Natural killer cell (primary cell): ENCODE measurements at regions of chr10 and their contacts with region 1.

Region 1: GRCh38 chr10:1048732-1049424 is at the start of gene IDI1:
- DNase-seq: peak; percentile 98
- ATAC-seq: peak; percentile 77 to 93 (median 81)
- H3K4me3 ChIP-seq: peak within 1 kb of the TSS; percentile 93
- H3K4me3 Mint-ChIP-seq: peak within 1 kb of the TSS; percentile 95
- H3K27ac ChIP-seq: peak within 1 kb of the TSS; percentile 100
- H3K27ac Mint-ChIP-seq: peak within 1 kb of the TSS; percentile 98 to 99
- H3K4me1 ChIP-seq: peaks cover 37% of the 10 kb centered on the region
- H3K4me1 Mint-ChIP-seq: peaks cover 56 to 78% of the 10 kb centered on the region in 2 donors
- H3K27me3 ChIP-seq: no peaks in the 10 kb centered on the region
- H3K27me3 Mint-ChIP-seq: no peaks in the 10 kb centered on the region
- CTCF ChIP-seq: no peak
- total RNA-seq, gene IDI1: 156 to 229 (median 163) TPM

Region 2: GRCh38 chr10:909831-910230 is 139.0 kb before region 1 on chr10:
- intact Hi-C with region 1: no loop called
- DNase-seq: no peak
- ATAC-seq: no peak
- H3K4me3 ChIP-seq: no peak overlapping the region
- H3K4me3 Mint-ChIP-seq: no peak overlapping the region
- H3K27ac ChIP-seq: no peak overlapping the region
- H3K27ac Mint-ChIP-seq: peak overlapping the region; percentile 0 to 9
- H3K4me1 ChIP-seq: no peaks in the 10 kb centered on the region
- H3K4me1 Mint-ChIP-seq: peaks cover 27 to 31% of the 10 kb centered on the region in 2 donors
- H3K27me3 ChIP-seq: no peaks in the 10 kb centered on the region
- H3K27me3 Mint-ChIP-seq: no peaks in the 10 kb centered on the region
- CTCF ChIP-seq: no peak

Region 3: GRCh38 chr10:931416-932318 is 117.2 kb before region 1 on chr10 and contains the start of gene LARP4B:
- intact Hi-C with region 1: loop called (anchors 2 kb)
- DNase-seq: peak; percentile 98
- ATAC-seq: peak; percentile 95 to 100 (median 97)
- H3K4me3 ChIP-seq: peak within 1 kb of the TSS; percentile 63
- H3K4me3 Mint-ChIP-seq: peak within 1 kb of the TSS; percentile 95
- H3K27ac ChIP-seq: peak within 1 kb of the TSS; percentile 96
- H3K27ac Mint-ChIP-seq: peak within 1 kb of the TSS; percentile 91 to 97
- H3K4me1 ChIP-seq: peaks cover 17% of the 10 kb centered on the region
- H3K4me1 Mint-ChIP-seq: peaks cover 24 to 40% of the 10 kb centered on the region in 2 donors
- H3K27me3 ChIP-seq: no peaks in the 10 kb centered on the region
- H3K27me3 Mint-ChIP-seq: no peaks in the 10 kb centered on the region
- CTCF ChIP-seq: no peak
- total RNA-seq, gene LARP4B: 75.5 to 95.4 (median 90.2) TPM

Region 4: DNA sequence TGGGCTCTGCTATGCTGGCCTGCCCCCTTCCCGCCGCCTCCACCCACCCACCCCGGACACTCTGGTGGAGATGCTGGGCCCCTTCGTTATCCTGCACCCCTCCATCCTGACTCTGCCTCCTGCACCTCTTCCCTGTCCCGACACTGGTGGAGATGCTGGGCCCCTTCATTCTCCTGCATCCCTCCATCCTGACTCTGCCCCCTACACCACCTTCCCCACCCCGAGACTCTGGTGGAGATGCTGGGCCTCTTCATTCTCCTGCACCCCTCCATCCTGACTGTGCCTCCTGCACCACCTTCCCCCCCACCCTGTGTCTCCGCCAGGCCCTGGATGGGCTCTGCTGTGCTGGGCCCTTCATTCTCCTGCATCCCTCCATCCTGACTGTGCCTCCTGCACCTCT is 38.2 kb before region 1 on chr10:
- intact Hi-C with region 1: loop called (anchors 1 kb)
- DNase-seq: no peak
- ATAC-seq: no peak
- H3K4me3 ChIP-seq: no peak overlapping the region
- H3K4me3 Mint-ChIP-seq: no peak overlapping the region
- H3K27ac ChIP-seq: no peak overlapping the region
- H3K27ac Mint-ChIP-seq: peak overlapping the region in 1 of 2 donors; percentile 67
- H3K4me1 ChIP-seq: no peaks in the 10 kb centered on the region
- H3K4me1 Mint-ChIP-seq: peaks cover 0 to 39% of the 10 kb centered on the region in 2 donors
- H3K27me3 ChIP-seq: no peaks in the 10 kb centered on the region
- H3K27me3 Mint-ChIP-seq: no peaks in the 10 kb centered on the region
- CTCF ChIP-seq: no peak

Region 5: GRCh38 chr10:1061930-1062774 is 13.3 kb after region 1 on chr10:
- intact Hi-C with region 1: loop called (anchors 2 kb)
- DNase-seq: peak in 1 of 2 donors; percentile 28
- ATAC-seq: no peak
- H3K4me3 ChIP-seq: no peak overlapping the region
- H3K4me3 Mint-ChIP-seq: peak overlapping the region; percentile 76
- H3K27ac ChIP-seq: peak overlapping the region; percentile 74
- H3K27ac Mint-ChIP-seq: peak overlapping the region; percentile 88 to 89
- H3K4me1 ChIP-seq: peaks cover 69% of the 10 kb centered on the region
- H3K4me1 Mint-ChIP-seq: peaks cover 89 to 90% of the 10 kb centered on the region in 2 donors
- H3K27me3 ChIP-seq: no peaks in the 10 kb centered on the region
- H3K27me3 Mint-ChIP-seq: no peaks in the 10 kb centered on the region
- CTCF ChIP-seq: no peak